ENCODE measurements at regions of chr10 and their contacts with region 1.

Region 1: GRCh38 chr10:86363184-86363832 is 3.3 kb downstream of the GRID1 start:
- DNase-seq: peak in 1 of 2 experiments; percentile 46
- H3K4me3 ChIP-seq: no peak overlapping the region
- H3K27ac ChIP-seq: no peak overlapping the region
- H3K4me1 ChIP-seq: no peaks in the 10 kb centered on the region
- H3K27me3 ChIP-seq: no peaks in the 10 kb centered on the region
- CTCF ChIP-seq: no peak

Region 2: DNA sequence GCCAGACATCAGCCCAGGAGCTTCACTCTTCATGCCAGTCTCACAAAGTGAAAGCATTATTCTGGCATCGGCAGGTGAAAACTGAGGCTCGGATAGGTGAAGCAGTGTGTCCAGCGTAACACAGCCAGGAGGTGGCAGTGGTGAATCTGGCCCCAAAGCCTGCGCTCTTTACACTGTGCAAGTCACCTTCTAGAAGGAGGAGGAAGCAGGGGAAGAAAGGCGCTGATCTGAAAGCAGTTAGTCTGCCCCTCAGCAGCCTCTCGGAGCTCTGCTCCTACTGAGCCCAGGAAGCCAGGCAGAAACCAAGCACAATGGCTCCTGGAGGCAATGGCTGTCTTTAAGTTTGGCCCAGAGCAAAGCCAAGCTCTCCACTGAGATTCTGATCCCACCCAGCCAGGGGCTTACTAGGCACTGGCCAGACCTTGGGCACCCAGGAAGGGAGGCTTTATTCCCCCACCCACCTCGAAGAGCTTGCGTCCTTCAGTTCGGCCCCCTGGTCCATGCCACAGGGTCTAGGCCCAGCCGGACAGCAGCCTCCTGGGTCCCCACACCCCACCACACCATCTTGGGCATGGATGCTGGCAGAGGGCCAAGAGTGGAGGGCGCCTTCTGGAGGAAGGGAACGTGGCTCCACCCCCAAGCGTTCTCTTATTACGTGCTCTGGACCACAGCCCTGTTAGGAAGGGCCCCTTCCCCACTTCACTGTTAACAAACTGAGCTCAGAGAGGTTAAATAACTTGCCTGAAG is 101.2 kb before region 1 on chr10:
- CTCF ChIA-PET with region 1: no interaction called
- POLR2A ChIA-PET with region 1: no interaction called
- intact Hi-C with region 1: loop called (anchors 5 kb)
- DNase-seq: peak in 1 of 2 experiments; percentile 32
- H3K4me3 ChIP-seq: no peak overlapping the region
- H3K27ac ChIP-seq: no peak overlapping the region
- H3K4me1 ChIP-seq: no peaks in the 10 kb centered on the region
- H3K27me3 ChIP-seq: peaks cover 2% of the 10 kb centered on the region; the same call in 1 of the 2 replicates
- CTCF ChIP-seq: peak; percentile 38; the same call in 1 of the 2 replicates

Measured in PC-9 (cell line).